GM18951 (cell line): ENCODE measurements at regions of chr15 and their contacts with region 1.

Region 1: DNA sequence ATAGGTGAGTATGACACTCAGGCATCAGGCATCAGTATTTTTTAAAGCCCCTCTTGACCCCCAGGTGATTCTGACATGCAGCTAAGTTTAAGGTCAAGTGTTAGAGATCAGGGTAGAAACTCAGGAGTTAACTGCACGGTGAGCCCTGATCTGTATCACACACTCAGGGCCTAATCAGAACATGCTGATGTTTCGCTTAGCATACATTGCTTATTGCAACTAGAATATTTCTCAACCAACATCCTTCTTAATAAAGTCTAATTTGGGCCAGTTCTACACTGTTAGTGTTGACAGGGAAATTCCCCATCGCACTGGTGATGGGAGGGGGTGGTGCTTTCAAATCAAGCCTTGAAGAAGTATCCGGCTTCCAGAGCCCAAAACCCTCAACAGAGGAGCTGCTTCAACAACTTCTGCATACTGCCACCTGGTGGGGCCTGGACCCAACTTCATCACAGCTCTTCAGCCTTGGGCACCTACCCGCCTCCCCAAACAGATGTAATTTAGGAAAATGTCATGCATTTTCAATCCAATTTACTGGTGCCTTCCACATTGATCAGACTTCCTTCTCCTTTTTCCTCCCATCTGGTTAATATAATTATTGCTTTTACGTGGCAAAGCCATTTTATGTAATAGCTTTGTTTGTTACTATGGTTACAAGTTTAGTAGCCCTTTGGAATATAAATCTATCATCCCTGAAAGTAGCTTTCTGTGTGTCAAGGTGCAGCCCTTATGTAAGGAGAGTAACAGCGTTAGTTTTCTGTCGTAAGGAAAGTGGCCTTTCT is 312.2 kb downstream of the RORA start:
- POLR2A ChIP-seq: no peak

Region 2: GRCh38 chr15:60374628-60375081 is 542.2 kb before region 1 on chr15:
- in situ Hi-C with region 1: loop called (anchors 25 kb)
- POLR2A ChIP-seq: no peak

Region 3: DNA sequence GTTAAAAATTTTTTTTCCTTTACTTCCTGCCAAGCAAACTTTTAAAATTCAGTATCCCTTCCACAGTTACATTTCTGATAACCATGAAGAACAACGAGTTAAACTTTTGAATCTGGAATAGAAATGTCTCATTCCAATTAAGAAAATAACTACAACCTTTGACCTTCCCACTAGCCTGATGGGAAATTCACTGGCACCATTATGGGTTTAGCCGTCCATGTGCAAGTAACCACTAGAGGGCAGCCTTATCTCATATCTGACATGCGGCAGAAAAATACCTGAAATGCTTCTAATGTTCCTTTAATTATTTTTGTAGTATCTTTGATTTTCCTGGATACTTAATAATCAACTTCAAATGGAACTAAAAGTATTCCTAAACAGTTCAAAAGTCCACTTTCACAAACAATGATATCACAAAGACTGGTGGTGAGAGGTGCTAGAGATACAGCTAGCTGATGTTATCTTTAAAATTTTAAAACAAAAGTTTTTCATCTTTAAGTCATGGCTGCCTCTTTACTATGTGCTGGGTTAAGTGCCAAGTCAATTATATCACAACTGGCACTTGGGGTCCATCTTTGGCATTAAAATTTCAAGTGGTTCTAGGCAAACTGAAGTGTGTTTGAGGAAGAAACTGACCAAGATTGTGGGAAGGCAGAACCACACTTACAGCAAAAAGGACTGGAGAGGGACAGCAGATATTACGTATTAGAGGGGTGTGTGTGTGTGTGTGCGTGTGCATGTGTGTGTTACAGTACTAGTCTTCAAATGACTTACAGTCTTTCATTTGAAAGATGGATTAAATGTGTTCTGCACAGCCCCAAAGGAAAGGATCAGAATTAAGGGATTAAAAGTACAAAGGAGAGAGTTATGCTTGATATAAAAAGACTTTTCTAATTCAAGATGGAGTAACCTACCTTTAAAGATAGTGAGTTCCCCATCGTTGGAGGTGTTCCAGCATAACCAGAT is 330.8 kb before region 1 on chr15:
- in situ Hi-C with region 1: loop called (anchors 5 kb)
- POLR2A ChIP-seq: no peak

Region 4: DNA sequence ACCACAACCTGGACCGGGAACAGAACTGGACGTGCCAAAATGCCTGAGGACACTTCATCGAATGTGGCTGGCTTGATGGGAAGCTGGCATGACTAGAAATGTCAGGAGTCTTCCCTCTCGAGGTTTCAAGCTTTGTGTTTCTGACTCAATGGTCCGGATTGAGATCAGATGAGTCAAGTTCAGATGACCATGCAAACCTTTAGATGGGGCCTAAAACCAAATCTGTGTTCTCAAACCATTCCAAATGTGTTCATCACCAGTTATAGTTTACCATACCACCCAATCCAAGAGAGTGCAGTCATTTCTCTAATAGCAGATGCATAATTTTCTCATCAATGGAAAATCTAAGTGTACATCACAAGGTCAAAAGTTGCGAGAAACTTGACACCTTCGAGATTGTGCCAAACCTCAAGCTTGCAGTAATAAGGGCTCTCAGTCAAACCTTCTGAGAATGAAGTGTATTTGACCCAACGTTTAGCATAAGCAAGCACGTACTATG is 56.8 kb before region 1 on chr15:
- in situ Hi-C with region 1: no loop called
- POLR2A ChIP-seq: no peak